ENCODE measurements at regions of chr4 and their contacts with region 1.

Region 1: DNA sequence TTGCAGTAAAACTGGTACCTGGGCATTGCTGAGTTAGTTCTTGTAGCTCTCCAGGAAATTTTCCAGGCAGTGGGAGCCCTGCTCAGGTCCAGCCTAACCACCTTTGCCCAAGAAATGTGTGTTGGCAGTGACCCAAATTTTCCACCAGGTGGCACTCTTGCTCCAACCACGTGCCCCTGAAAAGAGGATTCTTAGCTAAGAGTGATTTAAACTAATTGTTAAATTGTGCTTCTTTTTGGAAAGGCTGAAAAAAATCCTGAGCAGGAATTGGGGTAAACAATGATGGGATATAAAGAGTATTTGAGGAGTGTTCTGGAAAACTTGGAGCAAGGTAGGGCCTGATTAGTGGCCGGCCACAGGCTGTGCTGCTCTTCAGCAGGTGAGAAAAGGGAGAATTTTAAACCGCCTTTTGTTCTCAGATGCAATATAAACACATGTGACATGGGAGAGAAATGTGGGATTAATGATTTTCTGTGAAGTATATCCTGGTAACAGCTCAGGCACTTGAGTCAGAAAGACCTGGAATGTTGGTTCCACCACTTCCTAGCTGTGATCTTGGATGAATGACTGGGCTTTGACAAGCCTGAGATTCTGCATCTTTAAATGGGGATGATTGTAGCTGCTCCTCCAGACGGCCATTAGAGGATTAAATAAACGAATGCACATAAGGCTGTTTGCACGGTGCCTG is 219.6 kb downstream of the PTTG2 start:
- DNase-seq: peak; percentile 60
- H3K4me3 ChIP-seq: no peak overlapping the region
- H3K27ac ChIP-seq: no peak overlapping the region
- H3K4me1 ChIP-seq: no peaks in the 10 kb centered on the region
- CTCF ChIP-seq: peak; percentile 98

Region 2: DNA sequence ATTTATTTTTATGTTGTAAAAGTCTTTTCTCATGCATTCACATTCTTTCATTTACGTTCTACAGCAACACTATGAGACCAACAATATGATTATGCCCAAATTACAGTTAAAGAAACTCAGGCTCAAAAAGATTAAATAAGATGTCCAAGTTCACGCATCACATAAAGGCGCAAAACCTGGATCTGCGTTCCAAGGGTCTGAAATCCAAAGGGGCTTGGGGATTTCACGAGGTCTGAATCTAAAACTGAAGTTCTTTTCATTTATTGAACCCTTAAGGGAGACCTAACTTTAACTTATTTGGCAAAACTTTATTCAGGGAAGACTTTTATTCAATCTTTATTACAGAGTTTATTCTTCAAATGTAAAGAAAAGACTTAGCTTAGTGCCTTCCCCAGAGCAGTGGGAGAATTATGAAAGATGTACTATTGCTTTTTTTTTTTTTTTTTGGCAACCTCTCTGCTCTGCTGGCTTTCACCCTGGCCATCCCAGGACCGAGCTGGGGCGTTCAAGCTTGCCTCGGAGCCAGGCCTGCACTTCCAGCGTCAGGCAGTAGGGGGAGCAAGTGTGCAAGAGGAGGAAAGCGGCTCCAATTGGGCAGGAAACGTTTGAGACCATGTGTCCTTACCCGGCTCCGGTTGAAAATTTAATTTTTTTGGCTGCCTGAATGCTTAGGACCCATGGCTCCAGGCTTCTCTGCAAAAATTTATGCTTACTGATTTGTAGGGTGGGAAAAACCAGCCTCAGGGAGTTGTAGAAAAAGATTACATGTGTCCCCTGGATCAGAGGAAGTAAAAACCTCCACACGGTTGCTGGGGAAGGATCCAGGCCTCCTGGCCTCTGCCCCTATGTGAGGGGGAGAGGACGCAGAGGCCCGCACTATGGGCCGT is 139.9 kb after region 1 on chr4:
- CTCF ChIA-PET with region 1: no interaction called
- POLR2A ChIA-PET with region 1: no interaction called
- intact Hi-C with region 1: loop called (anchors 5 kb)
- DNase-seq: peak; percentile 70
- H3K4me3 ChIP-seq: peak overlapping the region; percentile 32
- H3K27ac ChIP-seq: no peak overlapping the region
- H3K4me1 ChIP-seq: peaks cover 16% of the 10 kb centered on the region
- CTCF ChIP-seq: peak; percentile 95

Region 3: DNA sequence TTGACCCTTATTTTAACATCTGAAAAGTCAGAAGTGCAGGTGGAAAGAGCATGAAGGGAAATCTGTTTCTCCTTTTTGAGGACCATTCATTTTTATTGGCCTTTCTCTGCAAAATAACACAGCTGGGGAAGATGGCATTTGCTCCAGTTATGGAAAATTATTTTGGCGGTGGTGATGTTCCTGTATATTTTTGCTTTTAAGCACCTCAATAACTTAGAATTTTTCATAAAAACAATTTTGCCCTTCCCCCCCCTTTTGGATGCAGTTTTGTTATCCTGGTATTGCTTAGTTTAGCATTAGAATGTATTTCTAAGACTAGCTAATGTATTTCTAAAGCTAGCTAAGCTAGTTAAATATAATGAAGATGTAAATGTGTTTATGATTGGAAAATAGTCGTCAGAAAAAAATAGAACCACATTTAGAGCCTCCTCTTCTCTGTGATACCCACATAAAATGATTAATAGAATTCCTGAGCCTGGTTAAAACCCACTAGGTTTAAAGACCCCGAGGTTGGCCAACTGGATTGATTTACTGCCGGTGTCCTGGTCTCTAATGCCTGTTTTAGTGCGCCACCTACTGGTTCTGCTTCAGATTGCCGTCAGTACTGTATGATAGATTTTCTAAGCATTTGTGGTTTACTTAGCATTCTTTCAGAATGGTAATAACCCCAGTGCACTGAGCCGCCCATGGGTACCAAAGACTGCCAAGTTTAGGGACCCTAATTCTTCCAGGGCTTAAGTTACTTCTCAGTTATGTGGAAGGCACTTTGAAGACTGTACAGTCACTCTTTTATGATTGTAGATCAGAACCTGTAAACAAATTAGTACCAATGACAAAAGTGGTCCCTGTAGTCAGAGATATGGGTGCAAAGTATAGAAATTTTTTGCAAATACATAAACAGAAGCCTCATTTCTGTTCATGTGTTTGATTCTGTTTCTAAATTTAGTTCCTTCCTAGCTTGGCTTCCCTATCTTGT is 495.6 kb after region 1 on chr4:
- CTCF ChIA-PET with region 1: interaction called, 3 read pairs
- POLR2A ChIA-PET with region 1: no interaction called
- intact Hi-C with region 1: loop called (anchors 1 kb)
- DNase-seq: peak; percentile 78
- H3K4me3 ChIP-seq: no peak overlapping the region
- H3K27ac ChIP-seq: no peak overlapping the region
- H3K4me1 ChIP-seq: peaks cover 4% of the 10 kb centered on the region
- CTCF ChIP-seq: peak; percentile 99

Region 4: GRCh38 chr4:38730830-38731646 is 551.2 kb after region 1 on chr4:
- CTCF ChIA-PET with region 1: no interaction called
- POLR2A ChIA-PET with region 1: no interaction called
- intact Hi-C with region 1: loop called (anchors 1 kb)
- DNase-seq: peak; percentile 73
- H3K4me3 ChIP-seq: no peak overlapping the region
- H3K27ac ChIP-seq: no peak overlapping the region
- H3K4me1 ChIP-seq: no peaks in the 10 kb centered on the region
- CTCF ChIP-seq: peak; percentile 99

Measured in OCI-LY7 (cell line).